B cell (primary cell): ENCODE measurements at regions of chr6 and their contacts with region 1.

Region 1: DNA sequence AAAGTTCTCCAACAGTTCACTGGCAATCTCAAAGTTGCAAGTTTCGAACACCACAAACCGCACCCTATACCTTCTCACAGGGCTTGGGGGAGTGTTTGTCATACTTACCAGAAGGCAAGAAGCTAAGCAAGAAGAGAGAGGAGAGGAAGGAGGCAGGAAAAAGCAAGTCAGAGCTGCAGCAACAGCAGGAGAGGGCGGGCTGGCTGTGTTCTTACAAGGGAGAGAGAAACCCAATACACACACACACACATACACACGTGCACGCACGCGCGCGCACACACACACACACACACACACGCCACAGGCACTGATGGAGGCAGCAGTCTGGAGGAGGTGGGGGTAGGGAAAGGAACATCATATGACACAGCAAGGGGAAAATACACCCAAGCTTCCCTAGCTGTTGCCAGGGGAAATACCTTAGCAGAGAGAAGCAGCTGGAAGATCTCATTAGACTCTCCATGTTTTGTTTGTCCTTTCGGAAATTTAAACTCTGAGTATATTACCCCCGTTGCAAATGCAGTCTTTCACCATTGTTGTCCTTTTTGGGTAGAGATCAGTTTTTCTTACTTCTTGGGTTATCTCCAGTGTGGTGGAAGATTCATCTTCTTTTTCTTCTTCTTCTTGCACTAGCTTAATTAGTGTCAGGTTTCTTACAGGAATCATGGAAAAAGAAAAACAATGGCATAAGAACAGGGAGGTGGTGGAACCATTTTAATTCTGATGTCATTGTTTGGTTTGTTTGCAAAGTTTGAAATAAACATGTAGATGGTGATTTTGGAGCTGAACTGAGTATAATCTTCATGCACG is at the start of gene TXLNB:
- DNase-seq: peak; percentile 77
- ATAC-seq: peak; percentile 49
- H3K4me3 ChIP-seq: peak within 1 kb of the TSS; percentile 17 to 66 (median 34)
- H3K4me3 Mint-ChIP-seq: peak within 1 kb of the TSS; percentile 84
- H3K27ac ChIP-seq: peak within 1 kb of the TSS; percentile 93
- H3K27ac Mint-ChIP-seq: peak within 1 kb of the TSS; percentile 95
- H3K4me1 ChIP-seq: peaks cover 41 to 49% of the 10 kb centered on the region in 2 donors
- H3K4me1 Mint-ChIP-seq: peaks cover 73% of the 10 kb centered on the region
- H3K27me3 ChIP-seq: no peaks in the 10 kb centered on the region
- H3K27me3 Mint-ChIP-seq: no peaks in the 10 kb centered on the region
- CTCF ChIP-seq: no peak
- total RNA-seq, gene TXLNB: 3.3 and 3.6 TPM in 2 replicates

Region 2: DNA sequence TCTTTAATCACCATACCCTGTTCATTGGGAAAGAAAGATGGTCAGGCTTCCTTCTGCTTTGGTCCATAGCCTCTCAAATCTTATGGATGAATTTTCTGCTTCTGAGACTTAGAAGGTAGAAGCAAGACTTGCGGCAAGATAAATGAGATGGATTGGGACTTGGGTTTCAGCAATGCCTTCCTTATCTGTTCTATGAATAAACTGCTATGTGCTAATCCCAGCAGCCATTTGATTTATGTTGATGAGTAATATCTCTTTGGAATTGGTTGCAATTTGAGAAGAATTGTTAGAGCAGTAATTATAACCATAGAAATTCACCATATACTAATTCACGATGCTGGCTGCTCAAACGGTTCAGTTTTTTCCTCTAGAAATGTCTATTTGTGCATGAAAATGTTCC is 48.5 kb before region 1 on chr6:
- CTCF ChIA-PET with region 1: no interaction called
- POLR2A ChIA-PET with region 1: no interaction called
- intact Hi-C with region 1: no loop called
- DNase-seq: no peak
- ATAC-seq: no peak
- H3K4me3 ChIP-seq: no peak overlapping the region
- H3K4me3 Mint-ChIP-seq: no peak overlapping the region
- H3K27ac ChIP-seq: no peak overlapping the region
- H3K27ac Mint-ChIP-seq: no peak overlapping the region
- H3K4me1 ChIP-seq: no peaks in the 10 kb centered on the region
- H3K4me1 Mint-ChIP-seq: no peaks in the 10 kb centered on the region
- H3K27me3 ChIP-seq: no peaks in the 10 kb centered on the region
- H3K27me3 Mint-ChIP-seq: no peaks in the 10 kb centered on the region
- CTCF ChIP-seq: no peak

Region 3: DNA sequence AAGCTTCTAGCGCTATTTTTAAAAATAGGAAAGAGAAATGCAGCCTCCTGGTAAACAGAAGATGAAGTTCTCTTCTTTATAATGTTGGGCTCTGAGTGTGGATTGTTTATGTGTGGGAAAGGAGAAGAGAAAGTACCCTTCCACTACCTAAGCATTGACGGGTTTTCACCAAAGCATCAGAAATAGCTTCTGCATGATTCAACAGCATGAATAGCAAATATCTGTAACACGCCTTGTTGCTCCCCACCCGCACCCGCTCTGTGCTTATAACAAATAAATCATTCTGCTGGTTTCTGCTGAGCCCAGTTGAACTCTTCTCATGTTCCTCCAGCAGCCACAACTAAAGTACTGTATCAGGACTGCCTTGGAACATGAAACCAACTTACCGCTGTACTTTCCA is 21.0 kb before region 1 on chr6:
- CTCF ChIA-PET with region 1: interaction called, 14 read pairs
- POLR2A ChIA-PET with region 1: interaction called, 3 read pairs
- intact Hi-C with region 1: loop called (anchors 1 kb)
- DNase-seq: peak; percentile 77
- ATAC-seq: peak; percentile 96
- H3K4me3 ChIP-seq: peak overlapping the region in 4 of 5 experiments; percentile 12 to 69 (median 44)
- H3K4me3 Mint-ChIP-seq: peak overlapping the region; percentile 83
- H3K27ac ChIP-seq: peak overlapping the region; percentile 75 to 91
- H3K27ac Mint-ChIP-seq: peak overlapping the region; percentile 93
- H3K4me1 ChIP-seq: peaks cover 50 to 54% of the 10 kb centered on the region in 2 donors
- H3K4me1 Mint-ChIP-seq: peaks cover 69% of the 10 kb centered on the region
- H3K27me3 ChIP-seq: no peaks in the 10 kb centered on the region
- H3K27me3 Mint-ChIP-seq: no peaks in the 10 kb centered on the region
- CTCF ChIP-seq: no peak

Region 4: GRCh38 chr6:139278190-139278589 is 13.8 kb before region 1 on chr6:
- CTCF ChIA-PET with region 1: interaction called, 6 read pairs
- POLR2A ChIA-PET with region 1: interaction called, 3 read pairs
- intact Hi-C with region 1: loop called (anchors 1 kb)
- DNase-seq: no peak
- ATAC-seq: no peak
- H3K4me3 ChIP-seq: no peak overlapping the region
- H3K4me3 Mint-ChIP-seq: peak overlapping the region; percentile 30
- H3K27ac ChIP-seq: peak overlapping the region; percentile 36 to 79
- H3K27ac Mint-ChIP-seq: peak overlapping the region; percentile 96
- H3K4me1 ChIP-seq: peaks cover 36 to 39% of the 10 kb centered on the region in 2 donors
- H3K4me1 Mint-ChIP-seq: peaks cover 69% of the 10 kb centered on the region
- H3K27me3 ChIP-seq: no peaks in the 10 kb centered on the region
- H3K27me3 Mint-ChIP-seq: no peaks in the 10 kb centered on the region
- CTCF ChIP-seq: no peak

Region 5: GRCh38 chr6:139323511-139324300 is 31.7 kb after region 1 on chr6:
- CTCF ChIA-PET with region 1: interaction called, 4 read pairs
- POLR2A ChIA-PET with region 1: interaction called, 5 read pairs
- intact Hi-C with region 1: loop called (anchors 1 kb)
- DNase-seq: peak; percentile 88
- ATAC-seq: peak; percentile 74
- H3K4me3 ChIP-seq: peak overlapping the region; percentile 56 to 81 (median 67)
- H3K4me3 Mint-ChIP-seq: peak overlapping the region; percentile 92
- H3K27ac ChIP-seq: peak overlapping the region; percentile 83 to 92
- H3K27ac Mint-ChIP-seq: peak overlapping the region; percentile 98
- H3K4me1 ChIP-seq: peaks cover 30 to 42% of the 10 kb centered on the region in 2 donors
- H3K4me1 Mint-ChIP-seq: peaks cover 37% of the 10 kb centered on the region
- H3K27me3 ChIP-seq: no peaks in the 10 kb centered on the region
- H3K27me3 Mint-ChIP-seq: no peaks in the 10 kb centered on the region
- CTCF ChIP-seq: no peak